ENCODE measurements at regions of chr5 and their contacts with region 1.

Region 1: GRCh38 chr5:110086658-110087388 is 397.1 kb downstream of the MAN2A1 start:
- DNase-seq: peak; percentile 75
- H3K4me3 Mint-ChIP-seq: peak overlapping the region; percentile 23
- H3K27ac Mint-ChIP-seq: peak overlapping the region; percentile 83
- H3K4me1 Mint-ChIP-seq: peaks cover 31% of the 10 kb centered on the region
- H3K27me3 Mint-ChIP-seq: no peaks in the 10 kb centered on the region

Region 2: DNA sequence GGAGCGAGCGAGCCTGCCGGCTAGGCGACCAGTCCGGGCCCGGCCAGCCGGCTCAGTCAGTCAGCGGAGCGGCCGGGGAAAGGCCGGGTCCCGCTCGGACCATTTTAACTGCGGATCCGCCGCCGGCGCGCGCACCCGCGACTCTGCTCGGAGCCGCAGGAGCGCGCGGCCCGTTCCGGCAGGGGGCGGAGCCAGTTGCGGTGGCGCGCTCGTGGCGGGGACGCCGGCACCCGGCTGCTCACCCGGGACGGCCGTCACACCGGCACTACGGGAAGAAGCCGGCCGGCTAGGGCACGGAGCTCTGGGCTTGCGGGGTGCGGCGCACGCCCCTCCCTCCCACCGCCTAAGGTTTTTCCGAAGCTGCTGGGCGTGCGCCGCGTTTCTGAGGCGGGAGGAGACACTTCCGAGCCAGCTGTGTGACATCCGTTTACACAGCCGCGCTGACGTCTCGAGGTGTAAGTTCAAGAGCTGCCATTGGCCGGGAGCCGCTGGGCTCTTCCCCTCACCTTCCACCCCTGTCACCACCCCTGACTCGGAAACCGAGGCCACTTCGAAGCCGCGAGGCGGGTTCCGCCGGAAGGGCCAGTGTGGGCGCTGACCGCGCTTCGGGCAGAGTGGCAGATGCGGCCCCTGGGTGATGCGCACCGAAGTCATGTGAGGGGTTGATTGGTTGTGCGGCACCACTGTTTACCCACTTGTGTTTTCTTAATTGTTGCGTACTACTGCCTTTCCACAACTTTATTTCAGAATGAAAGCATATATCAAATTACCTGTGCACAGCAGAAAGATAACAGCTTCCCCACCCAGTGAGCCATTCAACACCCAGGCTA is 1704.7 kb before region 1 on chr5 and contains the start of gene FBXL17:
- CTCF ChIA-PET with region 1: no interaction called
- POLR2A ChIA-PET with region 1: no interaction called
- intact Hi-C with region 1: loop called (anchors 5 kb)
- DNase-seq: peak; percentile 96
- H3K4me3 Mint-ChIP-seq: peak within 1 kb of the TSS; percentile 79
- H3K27ac Mint-ChIP-seq: peak within 1 kb of the TSS; percentile 92
- H3K4me1 Mint-ChIP-seq: peaks cover 34% of the 10 kb centered on the region
- H3K27me3 Mint-ChIP-seq: peaks cover 1% of the 10 kb centered on the region
- total RNA-seq, gene FBXL17: 5.5 to 6.7 TPM

Region 3: DNA sequence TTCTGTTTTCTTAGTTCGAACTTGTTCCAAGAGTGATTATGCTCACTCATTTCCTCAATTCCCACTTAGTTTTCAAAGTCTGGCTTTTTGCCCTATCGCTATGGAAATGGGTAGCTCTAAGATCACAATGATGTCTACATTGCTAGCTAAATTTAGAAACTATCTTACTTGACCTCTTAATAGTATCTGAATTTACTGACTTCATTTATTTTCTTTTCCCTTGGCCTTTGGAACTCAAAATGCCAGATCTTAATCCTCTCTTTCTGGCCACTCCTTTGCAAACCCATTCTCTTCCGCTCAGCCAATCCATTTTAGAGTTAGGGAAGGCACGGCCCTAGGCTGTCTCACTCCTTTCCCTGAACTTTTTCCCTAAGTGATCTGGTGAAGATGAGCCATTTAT is 1202.1 kb before region 1 on chr5:
- CTCF ChIA-PET with region 1: no interaction called
- POLR2A ChIA-PET with region 1: no interaction called
- intact Hi-C with region 1: no loop called
- DNase-seq: no peak
- H3K4me3 Mint-ChIP-seq: no peak overlapping the region
- H3K27ac Mint-ChIP-seq: no peak overlapping the region
- H3K4me1 Mint-ChIP-seq: no peaks in the 10 kb centered on the region
- H3K27me3 Mint-ChIP-seq: no peaks in the 10 kb centered on the region

Region 4: GRCh38 chr5:109863752-109864151 is 223.1 kb before region 1 on chr5:
- CTCF ChIA-PET with region 1: no interaction called
- POLR2A ChIA-PET with region 1: no interaction called
- intact Hi-C with region 1: loop called (anchors 5 kb)
- DNase-seq: no peak
- H3K4me3 Mint-ChIP-seq: no peak overlapping the region
- H3K27ac Mint-ChIP-seq: peak overlapping the region; percentile 21
- H3K4me1 Mint-ChIP-seq: peaks cover 40% of the 10 kb centered on the region
- H3K27me3 Mint-ChIP-seq: no peaks in the 10 kb centered on the region

Region 5: DNA sequence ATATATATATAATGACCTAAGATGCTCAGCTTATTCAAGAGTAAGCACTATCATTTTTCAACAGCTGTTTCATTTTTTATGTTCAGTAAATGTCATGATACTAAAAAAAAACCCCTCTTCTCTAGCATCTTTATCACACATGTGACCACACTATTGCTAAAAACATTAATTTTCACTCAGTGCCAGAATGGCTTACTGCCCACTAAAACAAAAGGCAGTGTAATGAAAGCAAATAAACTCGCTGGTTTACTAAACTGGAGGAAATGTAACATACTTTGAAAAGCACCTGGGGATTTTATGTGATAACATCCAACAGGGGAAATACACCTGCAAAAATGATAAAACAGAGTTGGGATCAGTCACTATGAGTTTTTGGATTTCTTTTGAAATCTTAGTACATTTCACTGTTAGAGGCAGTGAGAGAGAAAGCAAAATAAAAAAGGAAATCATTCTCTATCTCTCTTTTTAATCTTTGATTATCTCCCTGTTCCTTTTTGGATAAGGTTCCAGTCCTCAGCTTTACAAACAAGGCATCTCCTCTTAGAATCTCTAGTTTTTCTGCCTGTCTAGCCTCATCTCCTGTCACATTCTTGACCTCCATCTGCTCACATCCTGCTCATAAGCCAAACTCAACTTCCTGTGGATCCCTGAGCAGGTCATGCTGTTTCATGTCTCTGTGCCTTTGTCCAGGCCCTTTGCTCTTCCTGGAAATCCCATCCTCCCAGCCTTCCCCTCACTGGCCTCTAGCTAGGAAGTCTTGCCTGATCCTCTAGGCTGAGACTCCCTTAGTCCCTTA is 59.1 kb before region 1 on chr5:
- CTCF ChIA-PET with region 1: no interaction called
- POLR2A ChIA-PET with region 1: no interaction called
- intact Hi-C with region 1: no loop called
- DNase-seq: no peak
- H3K4me3 Mint-ChIP-seq: no peak overlapping the region
- H3K27ac Mint-ChIP-seq: peak overlapping the region; percentile 18
- H3K4me1 Mint-ChIP-seq: peaks cover 16% of the 10 kb centered on the region
- H3K27me3 Mint-ChIP-seq: no peaks in the 10 kb centered on the region

Region 6: GRCh38 chr5:110054240-110054639 is 32.6 kb before region 1 on chr5:
- CTCF ChIA-PET with region 1: interaction called, 4 read pairs
- POLR2A ChIA-PET with region 1: interaction called, 4 read pairs
- intact Hi-C with region 1: loop called (anchors 1 kb)
- DNase-seq: peak; percentile 79
- H3K4me3 Mint-ChIP-seq: no peak overlapping the region
- H3K27ac Mint-ChIP-seq: peak overlapping the region; percentile 67
- H3K4me1 Mint-ChIP-seq: peaks cover 30% of the 10 kb centered on the region
- H3K27me3 Mint-ChIP-seq: no peaks in the 10 kb centered on the region

Region 7: GRCh38 chr5:110658006-110658405 is 571.2 kb after region 1 on chr5:
- CTCF ChIA-PET with region 1: no interaction called
- POLR2A ChIA-PET with region 1: no interaction called
- intact Hi-C with region 1: loop called (anchors 5 kb)
- DNase-seq: no peak
- H3K4me3 Mint-ChIP-seq: no peak overlapping the region
- H3K27ac Mint-ChIP-seq: no peak overlapping the region
- H3K4me1 Mint-ChIP-seq: peaks cover 8% of the 10 kb centered on the region
- H3K27me3 Mint-ChIP-seq: no peaks in the 10 kb centered on the region

Measured in activated CD4-positive, alpha-beta memory T cell treated with anti-CD3 and anti-CD28 coated beads for 36 hours (primary cell).